ENCODE measurements at regions of chr2 and their contacts with region 1.

Region 1: DNA sequence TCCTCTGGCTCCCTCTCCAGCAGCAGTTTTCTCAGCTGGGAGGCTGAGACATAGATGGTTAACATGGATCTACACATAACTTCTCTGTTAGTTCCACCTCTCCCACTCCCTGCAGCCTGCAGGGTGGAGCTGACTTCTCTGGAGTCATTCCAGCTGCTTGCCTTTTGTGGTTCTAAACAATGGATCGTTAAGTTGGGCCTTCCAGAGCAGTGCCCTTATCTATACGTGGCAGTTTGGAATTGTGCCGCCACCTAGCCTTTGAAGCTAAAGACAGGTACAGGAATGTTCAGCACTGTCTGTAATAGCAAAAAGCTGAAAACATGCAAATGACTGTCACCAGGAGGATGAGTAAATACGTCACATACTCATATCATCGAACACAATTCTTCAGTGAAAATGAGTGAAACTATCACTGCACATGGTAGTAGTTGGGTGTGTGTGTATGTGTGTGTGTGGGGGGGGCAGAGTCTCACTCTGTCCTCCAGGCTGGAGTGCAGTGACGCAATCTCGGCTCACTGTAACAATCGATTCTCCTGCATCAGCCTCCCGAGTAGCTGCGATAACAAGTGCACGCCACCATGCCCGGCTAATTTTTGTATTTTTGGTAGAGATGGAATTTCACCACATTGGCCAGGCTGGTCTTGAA is 50.3 kb downstream of the SH2D6 start:
- DNase-seq: no peak
- H3K4me3 ChIP-seq: no peak overlapping the region
- H3K27ac ChIP-seq: no peak overlapping the region
- H3K4me1 ChIP-seq: peaks cover 3 to 35% (median 27%) of the 10 kb centered on the region in 4 experiments
- H3K27me3 ChIP-seq: no peaks in the 10 kb centered on the region

Region 2: GRCh38 chr2:85457877-85458316 is 10.9 kb before region 1 on chr2:
- CTCF ChIA-PET with region 1: interaction called, 20 read pairs
- POLR2A ChIA-PET with region 1: no interaction called
- DNase-seq: no peak
- H3K4me3 ChIP-seq: no peak overlapping the region
- H3K27ac ChIP-seq: no peak overlapping the region
- H3K4me1 ChIP-seq: peaks cover 0 to 14% (median 10%) of the 10 kb centered on the region in 4 experiments
- H3K27me3 ChIP-seq: no peaks in the 10 kb centered on the region

Region 3: DNA sequence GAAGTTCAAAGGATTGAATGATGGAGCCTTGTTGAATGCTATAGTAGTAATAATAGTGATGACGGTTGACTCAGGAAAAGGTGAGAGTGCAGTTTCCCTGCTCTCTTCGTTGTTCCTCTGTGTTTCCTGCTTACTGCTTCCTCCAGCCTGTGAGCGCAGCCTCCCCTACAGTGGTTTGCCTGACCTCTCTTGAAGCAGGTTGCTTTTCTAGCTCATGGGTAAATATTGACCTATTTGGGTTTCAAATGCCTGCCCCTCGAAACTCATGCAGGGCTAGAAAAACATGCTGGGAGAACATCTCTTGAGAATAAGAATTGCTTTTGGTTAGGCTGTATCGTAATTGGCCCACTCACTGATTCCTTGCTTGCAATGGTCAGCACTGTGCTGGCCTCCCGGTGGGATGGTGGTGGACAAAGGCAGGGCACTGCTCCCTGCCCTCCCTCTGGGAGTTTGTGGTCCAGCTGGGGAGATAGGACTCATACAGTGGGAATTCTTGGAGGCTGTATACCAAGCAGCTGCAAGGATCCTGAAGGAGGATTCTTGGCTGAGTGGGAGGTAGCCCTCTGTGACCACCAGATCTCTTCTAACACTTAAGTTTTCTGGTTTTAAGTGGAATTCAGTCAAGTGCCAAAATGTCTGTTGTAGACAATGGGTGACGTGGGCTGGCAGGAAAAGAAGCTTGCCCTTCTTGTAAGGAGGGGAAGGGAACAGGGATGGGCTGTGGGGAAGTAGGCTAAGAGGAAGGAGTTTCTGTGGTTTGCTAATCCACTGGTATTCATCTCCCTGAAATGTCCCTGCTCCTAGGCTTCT is 121.4 kb after region 1 on chr2:
- CTCF ChIA-PET with region 1: no interaction called
- POLR2A ChIA-PET with region 1: no interaction called
- DNase-seq: no peak
- H3K4me3 ChIP-seq: peak overlapping the region in 1 of 7 experiments; percentile 39
- H3K27ac ChIP-seq: peak overlapping the region in 1 of 2 experiments; percentile 46
- H3K4me1 ChIP-seq: peaks cover 21 to 74% (median 70%) of the 10 kb centered on the region in 4 experiments
- H3K27me3 ChIP-seq: no peaks in the 10 kb centered on the region

Measured in common myeloid progenitor, CD34-positive (primary cell).